Dendritic cell treated with granulocyte-macrophage colony-stimulating factor and Interleukin-4, amounts not matched to agents 40 ng/mL and 50 ng/mL, for 4 days (primary cell): ENCODE measurements at regions of chr20 and their contacts with region 1.

Region 1: DNA sequence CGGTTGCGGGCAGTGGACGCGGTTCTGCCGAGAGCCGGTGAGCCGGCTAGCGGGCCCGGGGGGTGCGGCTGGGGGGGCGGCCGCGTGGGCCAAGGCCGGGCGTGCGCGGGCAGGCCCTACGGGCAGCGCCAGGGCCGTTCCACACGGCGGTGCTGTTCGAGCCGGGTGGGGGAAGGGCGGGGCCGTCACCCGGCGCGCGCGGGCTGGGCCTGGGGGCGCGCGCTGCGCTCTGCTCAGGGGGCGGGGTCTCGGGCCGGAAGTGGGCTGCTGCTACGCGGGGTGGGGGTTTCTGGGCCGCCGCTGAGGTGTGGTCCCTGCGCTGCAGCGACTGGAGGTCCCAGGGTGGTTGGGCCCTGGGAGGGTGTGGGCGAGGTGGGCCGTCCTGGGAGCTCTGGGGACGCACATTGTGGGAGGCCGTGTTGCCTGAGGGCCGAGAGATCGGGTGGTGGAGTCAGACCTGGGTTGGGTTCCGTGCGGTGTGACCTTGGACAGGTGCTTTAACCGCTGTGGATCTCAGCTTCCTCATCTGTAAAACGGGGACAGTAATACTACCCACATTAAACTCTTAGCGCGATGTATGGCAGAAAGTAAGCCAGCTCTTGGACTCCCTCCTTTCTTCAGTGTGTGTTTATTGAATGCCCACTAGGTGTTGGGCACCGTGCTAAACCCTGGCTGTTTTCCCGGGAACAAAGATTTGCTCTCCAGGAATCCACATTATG is 397 bp downstream of the MAPRE1 start:
- H3K4me3 Mint-ChIP-seq: peak overlapping the region; percentile 87
- H3K27ac Mint-ChIP-seq: peak overlapping the region; percentile 90
- H3K4me1 Mint-ChIP-seq: peaks cover 40% of the 10 kb centered on the region
- H3K27me3 Mint-ChIP-seq: no peaks in the 10 kb centered on the region

Region 2: DNA sequence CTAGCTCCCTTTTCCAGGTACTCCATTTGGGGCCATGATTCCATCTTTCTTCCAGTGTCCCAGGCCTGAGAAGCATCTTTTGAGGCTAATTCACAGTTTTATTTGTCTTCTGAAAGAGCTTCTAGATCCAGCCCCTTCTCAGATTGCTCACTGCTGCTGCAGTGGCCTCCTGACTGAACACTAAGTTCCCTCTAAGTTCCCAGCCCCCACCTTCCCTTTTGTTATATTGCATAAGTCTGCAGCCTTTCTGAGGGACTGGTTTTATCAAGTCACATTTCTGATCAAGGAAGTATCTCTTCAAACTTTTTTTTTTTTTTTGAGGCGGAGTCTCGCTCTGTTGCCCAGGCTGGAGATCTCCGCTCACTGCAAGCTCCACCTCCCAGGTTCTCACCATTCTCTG is 10.3 kb after region 1 on chr20:
- intact Hi-C with region 1: loop called (anchors 1 kb)
- H3K4me3 Mint-ChIP-seq: peak overlapping the region; percentile 39
- H3K27ac Mint-ChIP-seq: peak overlapping the region; percentile 90
- H3K4me1 Mint-ChIP-seq: peaks cover 36% of the 10 kb centered on the region
- H3K27me3 Mint-ChIP-seq: no peaks in the 10 kb centered on the region

Region 3: GRCh38 chr20:32995802-32996201 is 175.7 kb after region 1 on chr20:
- intact Hi-C with region 1: no loop called
- H3K4me3 Mint-ChIP-seq: no peak overlapping the region
- H3K27ac Mint-ChIP-seq: no peak overlapping the region
- H3K4me1 Mint-ChIP-seq: peaks cover 8% of the 10 kb centered on the region
- H3K27me3 Mint-ChIP-seq: no peaks in the 10 kb centered on the region

Region 4: GRCh38 chr20:33169176-33169794 is 349.1 kb after region 1 on chr20:
- intact Hi-C with region 1: no loop called
- H3K4me3 Mint-ChIP-seq: no peak overlapping the region
- H3K27ac Mint-ChIP-seq: no peak overlapping the region
- H3K4me1 Mint-ChIP-seq: no peaks in the 10 kb centered on the region
- H3K27me3 Mint-ChIP-seq: peaks cover 5% of the 10 kb centered on the region